CD4-positive, alpha-beta T cell (primary cell): ENCODE measurements at regions of chr1 and their contacts with region 1.

Region 1: GRCh38 chr1:11037740-11038182 is 9.3 kb downstream of the MASP2 start:
- DNase-seq: peak; percentile 81 to 94 (median 89)
- ATAC-seq: peak; percentile 100
- H3K4me3 ChIP-seq: no peak overlapping the region
- H3K4me3 Mint-ChIP-seq: no peak overlapping the region
- H3K27ac ChIP-seq: no peak overlapping the region
- H3K27ac Mint-ChIP-seq: no peak overlapping the region
- H3K4me1 ChIP-seq: peaks cover 5% of the 10 kb centered on the region
- H3K4me1 Mint-ChIP-seq: peaks cover 8% of the 10 kb centered on the region
- H3K27me3 ChIP-seq: peaks cover 2 to 5% of the 10 kb centered on the region in 2 experiments
- H3K27me3 Mint-ChIP-seq: peaks cover 6% of the 10 kb centered on the region
- CTCF ChIP-seq: peak; percentile 99

Region 2: DNA sequence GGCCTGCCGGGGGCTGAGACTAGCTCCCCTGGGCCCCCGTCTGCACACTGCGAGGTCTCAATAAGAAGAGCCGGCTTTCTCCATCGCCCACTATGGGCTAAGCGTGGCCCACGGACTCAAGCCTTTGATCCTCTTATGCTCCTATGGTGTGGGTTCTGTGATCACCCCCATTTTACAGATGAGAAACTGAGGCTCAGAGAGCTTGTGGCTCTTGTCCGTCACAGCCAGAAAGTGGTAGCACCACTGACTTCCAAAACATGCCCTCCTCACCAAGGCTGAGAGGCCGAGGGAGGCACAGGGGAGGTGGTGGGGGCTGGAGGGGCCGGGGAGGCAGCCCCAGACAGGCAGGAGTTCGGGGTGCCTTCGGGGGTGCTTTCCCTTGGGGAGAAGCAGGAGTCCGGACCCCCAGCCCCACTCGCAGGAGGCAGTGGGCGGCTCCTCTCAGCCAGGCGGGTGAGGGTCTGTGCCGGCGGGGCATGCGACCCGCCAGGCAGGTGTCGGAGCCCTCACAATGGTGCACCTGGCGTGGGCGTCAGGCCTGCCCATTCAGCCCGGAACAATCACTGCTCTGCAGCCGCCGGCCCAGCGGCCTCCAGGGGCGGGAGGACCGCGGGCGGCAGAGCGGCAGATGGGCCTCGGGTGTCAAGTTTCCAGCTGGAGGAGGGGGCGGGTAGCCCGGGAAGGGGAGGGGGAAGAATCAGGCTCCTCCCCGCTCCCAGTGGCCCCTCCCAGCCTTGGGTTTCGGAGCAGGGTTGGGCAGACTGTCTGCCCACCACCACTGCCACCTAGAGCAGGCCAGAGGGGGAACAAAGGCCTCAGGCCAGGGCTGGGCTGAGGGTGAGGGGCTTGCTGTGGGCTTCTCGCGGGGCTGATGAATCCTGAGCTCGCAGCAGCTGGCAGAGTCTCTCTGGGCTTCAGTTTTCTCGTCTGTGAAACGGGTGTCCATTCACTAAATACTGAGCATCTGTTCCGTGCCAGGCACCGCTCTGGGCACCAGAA is 202.0 kb before region 1 on chr1:
- CTCF ChIA-PET with region 1: no interaction called
- POLR2A ChIA-PET with region 1: no interaction called
- intact Hi-C with region 1: no loop called
- DNase-seq: no peak
- ATAC-seq: no peak
- H3K4me3 ChIP-seq: no peak overlapping the region
- H3K4me3 Mint-ChIP-seq: no peak overlapping the region
- H3K27ac ChIP-seq: no peak overlapping the region
- H3K27ac Mint-ChIP-seq: no peak overlapping the region
- H3K4me1 ChIP-seq: peaks cover 4% of the 10 kb centered on the region
- H3K4me1 Mint-ChIP-seq: no peaks in the 10 kb centered on the region
- H3K27me3 ChIP-seq: peaks cover 25 to 30% of the 10 kb centered on the region in 2 experiments
- H3K27me3 Mint-ChIP-seq: peaks cover 57% of the 10 kb centered on the region
- CTCF ChIP-seq: no peak

Region 3: DNA sequence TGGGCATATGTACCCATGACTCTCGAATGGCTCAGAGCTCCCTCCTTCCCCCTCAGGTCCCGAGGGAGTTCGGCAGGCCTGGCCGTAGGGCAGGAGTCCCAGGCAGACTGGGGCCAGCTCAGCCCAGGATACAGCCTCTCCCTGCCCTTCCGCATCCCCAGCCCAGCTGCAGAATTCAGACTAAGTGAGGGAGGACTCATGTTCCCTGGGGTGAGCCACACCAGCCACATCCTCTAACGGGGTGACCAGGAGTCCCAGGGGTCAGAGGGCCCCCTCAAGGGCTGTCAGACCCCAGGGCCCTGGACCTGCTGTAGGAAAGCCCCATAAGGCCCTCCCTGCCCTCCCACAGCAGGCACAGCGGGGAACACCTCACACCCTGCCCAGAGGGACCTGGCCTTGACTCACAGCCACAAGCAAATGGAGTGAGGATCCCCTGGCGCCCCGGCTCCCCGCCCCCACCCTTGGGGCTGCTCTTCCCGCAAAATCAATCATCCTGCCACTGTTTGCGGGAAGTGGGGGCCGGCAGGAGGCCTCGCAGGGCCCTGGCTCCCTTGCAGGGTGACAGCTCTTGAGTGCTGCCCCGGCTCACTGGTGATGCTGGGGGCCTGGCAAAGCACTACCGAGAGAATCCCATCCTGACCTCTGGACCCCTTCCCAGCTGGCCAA is 139.6 kb before region 1 on chr1:
- CTCF ChIA-PET with region 1: no interaction called
- POLR2A ChIA-PET with region 1: no interaction called
- intact Hi-C with region 1: no loop called
- DNase-seq: no peak
- ATAC-seq: no peak
- H3K4me3 ChIP-seq: no peak overlapping the region
- H3K4me3 Mint-ChIP-seq: no peak overlapping the region
- H3K27ac ChIP-seq: no peak overlapping the region
- H3K27ac Mint-ChIP-seq: no peak overlapping the region
- H3K4me1 ChIP-seq: no peaks in the 10 kb centered on the region
- H3K4me1 Mint-ChIP-seq: no peaks in the 10 kb centered on the region
- H3K27me3 ChIP-seq: no peaks in the 10 kb centered on the region
- H3K27me3 Mint-ChIP-seq: no peaks in the 10 kb centered on the region
- CTCF ChIP-seq: no peak

Region 4: DNA sequence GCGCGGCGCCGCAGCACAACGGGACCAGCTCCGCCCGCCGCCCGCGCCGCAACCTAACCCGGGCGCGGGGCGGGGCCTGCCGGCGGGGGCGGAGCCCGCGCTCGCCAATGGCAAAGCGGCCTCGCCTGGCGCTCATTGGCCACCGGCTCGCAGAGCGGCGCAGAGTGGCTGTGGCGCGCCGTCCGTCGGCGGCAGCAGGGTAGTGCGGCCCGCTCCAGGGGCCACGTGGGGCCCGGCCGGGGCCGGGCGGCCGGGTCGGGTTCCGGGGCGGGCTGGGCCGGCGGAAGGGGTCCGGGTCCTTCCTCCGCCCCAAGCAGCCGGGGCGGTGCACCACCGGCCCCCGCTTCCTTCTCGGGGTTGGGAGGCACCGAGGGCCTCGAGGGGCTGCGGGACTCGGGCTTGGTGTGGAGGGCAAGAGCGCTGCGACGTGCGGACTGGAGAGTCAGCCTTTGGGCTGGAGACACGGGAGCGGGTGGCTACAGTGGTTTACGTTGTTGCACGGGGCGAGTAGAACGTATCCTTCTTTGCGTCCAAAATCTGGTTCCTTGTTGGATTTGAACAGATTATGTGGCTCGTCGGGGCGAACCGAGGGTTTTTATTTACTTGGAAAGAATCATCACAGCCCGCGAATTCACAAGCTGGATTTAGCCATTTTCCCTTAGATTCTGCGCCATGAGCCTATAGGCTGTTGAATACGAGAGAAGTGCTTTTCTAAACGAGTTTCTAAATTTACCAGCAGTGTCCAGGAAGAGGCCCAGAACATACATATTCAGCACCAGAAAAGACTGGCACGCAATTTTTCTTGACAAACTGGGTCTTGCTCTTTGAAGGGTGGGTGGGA is 22.4 kb after region 1 on chr1 and contains the start of gene SRM:
- CTCF ChIA-PET with region 1: interaction called, 53 read pairs
- POLR2A ChIA-PET with region 1: interaction called, 17 read pairs
- intact Hi-C with region 1: loop called in 1 of 2 experiments (anchors 1 kb)
- DNase-seq: peak; percentile 76 to 96 (median 89)
- ATAC-seq: peak; percentile 96
- H3K4me3 ChIP-seq: peak within 1 kb of the TSS; percentile 76
- H3K4me3 Mint-ChIP-seq: peak within 1 kb of the TSS; percentile 96
- H3K27ac ChIP-seq: peak within 1 kb of the TSS; percentile 25 to 57
- H3K27ac Mint-ChIP-seq: peak within 1 kb of the TSS; percentile 77
- H3K4me1 ChIP-seq: peaks cover 32% of the 10 kb centered on the region
- H3K4me1 Mint-ChIP-seq: peaks cover 39% of the 10 kb centered on the region
- H3K27me3 ChIP-seq: no peaks in the 10 kb centered on the region
- H3K27me3 Mint-ChIP-seq: no peaks in the 10 kb centered on the region
- CTCF ChIP-seq: no peak
- total RNA-seq, gene SRM: 21.2 to 24.8 TPM

Region 5: DNA sequence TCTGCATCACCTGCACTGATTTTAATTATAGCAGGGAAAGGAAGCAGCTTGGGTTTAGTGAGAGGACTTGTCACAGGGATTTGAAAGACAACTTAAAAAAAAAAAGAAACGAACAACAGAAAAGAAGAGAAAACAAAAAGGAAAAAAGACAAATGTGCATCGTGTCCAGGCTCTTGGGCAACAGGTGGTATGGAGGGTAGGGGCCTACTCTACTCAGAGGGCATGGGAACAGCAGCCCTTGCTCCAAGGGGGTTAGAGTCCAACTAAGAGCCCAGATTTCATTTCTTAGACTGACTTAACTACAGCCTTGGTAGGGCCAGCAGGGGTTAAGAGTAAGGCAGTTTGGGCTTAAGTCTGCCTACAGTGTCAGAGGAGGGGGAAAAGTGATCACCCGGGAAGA is 77.2 kb after region 1 on chr1:
- CTCF ChIA-PET with region 1: interaction called, 8 read pairs
- POLR2A ChIA-PET with region 1: no interaction called
- intact Hi-C with region 1: loop called in 1 of 2 experiments (anchors 5 kb)
- DNase-seq: no peak
- ATAC-seq: no peak
- H3K4me3 ChIP-seq: no peak overlapping the region
- H3K4me3 Mint-ChIP-seq: no peak overlapping the region
- H3K27ac ChIP-seq: no peak overlapping the region
- H3K27ac Mint-ChIP-seq: no peak overlapping the region
- H3K4me1 ChIP-seq: no peaks in the 10 kb centered on the region
- H3K4me1 Mint-ChIP-seq: no peaks in the 10 kb centered on the region
- H3K27me3 ChIP-seq: no peaks in the 10 kb centered on the region
- H3K27me3 Mint-ChIP-seq: no peaks in the 10 kb centered on the region
- CTCF ChIP-seq: no peak

Region 6: DNA sequence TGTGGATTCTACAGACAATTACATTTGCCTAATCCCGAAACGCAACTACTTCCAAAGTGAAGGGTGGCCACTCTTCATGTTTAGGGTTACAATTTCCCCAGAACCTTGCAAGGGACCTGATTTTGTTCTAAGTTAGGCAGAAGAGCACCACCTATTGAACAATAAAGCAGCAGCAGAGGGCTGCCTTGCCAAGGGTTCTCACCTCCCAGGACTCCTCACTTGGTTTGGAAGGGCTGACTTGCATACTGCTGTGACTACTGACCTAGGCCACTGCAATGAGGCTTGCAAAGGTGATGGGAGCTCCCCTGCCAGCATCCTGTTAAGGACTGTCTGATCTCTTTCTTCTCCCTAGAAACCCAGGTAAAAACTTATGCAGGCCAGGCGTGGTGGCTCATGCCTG is 210.4 kb after region 1 on chr1:
- CTCF ChIA-PET with region 1: no interaction called
- POLR2A ChIA-PET with region 1: no interaction called
- intact Hi-C with region 1: loop called in 1 of 2 experiments (anchors 5 kb)
- DNase-seq: no peak
- ATAC-seq: no peak
- H3K4me3 ChIP-seq: no peak overlapping the region
- H3K4me3 Mint-ChIP-seq: no peak overlapping the region
- H3K27ac ChIP-seq: no peak overlapping the region
- H3K27ac Mint-ChIP-seq: no peak overlapping the region
- H3K4me1 ChIP-seq: peaks cover 21% of the 10 kb centered on the region
- H3K4me1 Mint-ChIP-seq: peaks cover 25% of the 10 kb centered on the region
- H3K27me3 ChIP-seq: no peaks in the 10 kb centered on the region
- H3K27me3 Mint-ChIP-seq: no peaks in the 10 kb centered on the region
- CTCF ChIP-seq: no peak

Region 7: DNA sequence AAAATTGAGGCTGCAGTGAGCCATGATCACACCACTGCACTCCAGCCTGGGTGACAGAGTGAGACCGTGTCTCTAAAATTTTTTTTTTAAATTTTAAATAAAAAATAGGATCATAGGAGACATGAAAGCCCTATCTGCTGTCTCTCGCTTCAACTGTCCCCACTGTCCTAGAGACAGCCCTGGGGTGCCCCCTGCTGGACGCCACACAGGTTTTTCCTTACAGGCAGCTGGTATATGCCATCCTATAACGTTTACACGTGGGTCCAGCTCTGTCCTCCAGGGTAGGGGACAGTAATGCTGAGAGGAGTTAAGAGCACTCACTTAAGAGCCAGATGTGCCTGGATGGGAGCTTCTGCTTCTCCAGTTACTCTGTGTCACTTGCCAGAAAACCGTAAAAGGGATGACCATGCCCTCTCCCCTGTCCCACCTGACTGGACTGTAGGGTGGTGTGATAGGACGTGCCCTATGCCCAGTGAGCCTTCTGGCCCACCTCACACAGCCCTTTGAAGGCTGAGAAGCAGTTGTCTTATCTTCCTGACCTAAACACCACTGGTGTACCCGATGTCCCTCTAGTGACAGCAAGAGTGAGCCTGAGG is 608.0 kb after region 1 on chr1:
- CTCF ChIA-PET with region 1: interaction called, 18 read pairs
- POLR2A ChIA-PET with region 1: interaction called, 5 read pairs
- intact Hi-C with region 1: loop called (anchors 1 kb)
- DNase-seq: peak; percentile 71 to 90 (median 78)
- ATAC-seq: peak; percentile 59
- H3K4me3 ChIP-seq: no peak overlapping the region
- H3K4me3 Mint-ChIP-seq: no peak overlapping the region
- H3K27ac ChIP-seq: no peak overlapping the region
- H3K27ac Mint-ChIP-seq: no peak overlapping the region
- H3K4me1 ChIP-seq: peaks cover 26% of the 10 kb centered on the region
- H3K4me1 Mint-ChIP-seq: peaks cover 19% of the 10 kb centered on the region
- H3K27me3 ChIP-seq: no peaks in the 10 kb centered on the region
- H3K27me3 Mint-ChIP-seq: peaks cover 5% of the 10 kb centered on the region
- CTCF ChIP-seq: peak; percentile 75

Region 8: DNA sequence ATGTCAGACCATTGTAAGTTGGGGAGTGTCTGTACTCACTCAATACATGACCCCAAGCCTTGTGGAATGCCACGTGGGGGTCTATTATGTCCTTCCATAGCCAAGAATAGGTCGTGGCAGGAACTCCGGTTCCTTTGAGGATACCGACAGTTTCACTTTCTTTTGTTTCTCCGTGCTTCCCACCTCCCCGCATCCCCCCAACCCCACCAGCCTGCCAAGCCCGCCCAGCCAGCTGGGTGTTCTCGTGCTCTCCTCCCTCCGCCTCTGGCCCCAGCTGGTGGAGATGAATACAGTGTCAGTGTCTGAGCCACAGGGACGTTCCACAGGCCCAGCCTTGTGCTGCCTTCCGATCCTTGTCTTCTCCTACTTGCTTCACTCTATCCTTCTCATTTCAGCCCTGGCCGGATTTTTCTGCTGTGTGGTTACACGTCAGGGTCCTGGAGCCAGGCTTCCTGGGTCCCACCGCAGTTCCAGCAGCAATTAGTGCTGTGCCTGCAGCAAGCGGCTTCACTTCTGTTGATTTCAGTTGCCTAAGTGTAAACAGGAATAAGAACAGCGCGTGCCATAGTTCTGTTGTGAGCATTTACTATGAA is 694.0 kb after region 1 on chr1:
- CTCF ChIA-PET with region 1: no interaction called
- POLR2A ChIA-PET with region 1: no interaction called
- intact Hi-C with region 1: no loop called
- DNase-seq: peak in 6 of 14 experiments; percentile 17 to 57 (median 43)
- ATAC-seq: no peak
- H3K4me3 ChIP-seq: peak overlapping the region; percentile 42
- H3K4me3 Mint-ChIP-seq: peak overlapping the region; percentile 92
- H3K27ac ChIP-seq: peak overlapping the region in 1 of 2 donors; percentile 10
- H3K27ac Mint-ChIP-seq: peak overlapping the region; percentile 81
- H3K4me1 ChIP-seq: peaks cover 62% of the 10 kb centered on the region
- H3K4me1 Mint-ChIP-seq: peaks cover 52% of the 10 kb centered on the region
- H3K27me3 ChIP-seq: no peaks in the 10 kb centered on the region
- H3K27me3 Mint-ChIP-seq: no peaks in the 10 kb centered on the region
- CTCF ChIP-seq: no peak